Activated CD4-positive, alpha-beta T cell treated with anti-CD3 and anti-CD28 coated beads, Interleukin-2, amount 10 ng/mL, durations not matched to agents 24 days and 14 days (primary cell): ENCODE measurements at regions of chr10 and their contacts with region 1.

Region 1: GRCh38 chr10:92290837-92291615 is at the starts of genes CPEB3 and MARCHF5:
- DNase-seq: peak; percentile 98
- H3K4me3 Mint-ChIP-seq: peak within 1 kb of the TSS; percentile 93
- H3K27ac Mint-ChIP-seq: peak within 1 kb of the TSS; percentile 85
- H3K4me1 Mint-ChIP-seq: peaks cover 22% of the 10 kb centered on the region
- H3K27me3 Mint-ChIP-seq: no peaks in the 10 kb centered on the region
- total RNA-seq, gene CPEB3: 2.2 and 2.5 TPM in 2 replicates
- total RNA-seq, gene MARCHF5: 22.0 and 24.7 TPM in 2 replicates

Region 2: GRCh38 chr10:91923371-91924211 is 367.4 kb before region 1 on chr10 and contains the start of gene BTAF1:
- intact Hi-C with region 1: loop called (anchors 10 kb)
- DNase-seq: peak; percentile 97
- H3K4me3 Mint-ChIP-seq: peak within 1 kb of the TSS; percentile 87
- H3K27ac Mint-ChIP-seq: peak within 1 kb of the TSS; percentile 99
- H3K4me1 Mint-ChIP-seq: peaks cover 28% of the 10 kb centered on the region
- H3K27me3 Mint-ChIP-seq: peaks cover 2% of the 10 kb centered on the region
- total RNA-seq, gene BTAF1: 63.9 and 67.1 TPM in 2 replicates

Region 3: DNA sequence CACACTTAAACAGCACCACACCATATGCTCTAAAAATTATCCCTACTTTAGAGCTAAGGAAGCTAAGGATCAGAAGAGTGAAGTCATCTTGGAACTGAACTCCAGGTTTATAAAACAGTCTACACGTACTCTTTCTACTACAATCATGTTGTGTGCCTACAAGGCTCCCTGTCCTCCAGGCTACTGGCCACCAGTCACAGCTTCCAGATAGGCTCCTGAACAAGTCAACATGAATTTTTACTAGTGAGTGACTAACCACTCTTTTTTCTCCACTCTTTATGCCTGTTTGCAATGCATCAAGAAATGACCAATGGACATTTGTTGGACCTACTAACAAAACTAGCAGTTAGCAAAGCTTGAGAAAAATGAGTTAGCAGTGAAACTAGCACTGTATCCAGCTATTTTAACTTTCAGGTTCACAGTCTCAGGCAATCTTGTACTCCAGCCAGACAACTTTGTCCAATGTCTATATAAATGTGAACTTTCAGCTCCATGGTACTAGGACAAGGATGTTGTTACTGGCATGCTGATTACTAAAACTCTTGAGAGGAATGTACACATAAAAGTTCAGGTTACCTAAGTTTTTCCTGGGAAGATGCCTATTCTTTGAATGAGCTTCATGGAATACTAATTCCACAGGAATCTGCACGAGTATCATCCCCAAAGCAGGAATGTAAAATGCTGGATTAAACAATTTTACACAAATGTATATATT is 187.5 kb before region 1 on chr10:
- intact Hi-C with region 1: loop called (anchors 5 kb)
- DNase-seq: no peak
- H3K4me3 Mint-ChIP-seq: no peak overlapping the region
- H3K27ac Mint-ChIP-seq: no peak overlapping the region
- H3K4me1 Mint-ChIP-seq: peaks cover 14% of the 10 kb centered on the region
- H3K27me3 Mint-ChIP-seq: no peaks in the 10 kb centered on the region

Region 4: DNA sequence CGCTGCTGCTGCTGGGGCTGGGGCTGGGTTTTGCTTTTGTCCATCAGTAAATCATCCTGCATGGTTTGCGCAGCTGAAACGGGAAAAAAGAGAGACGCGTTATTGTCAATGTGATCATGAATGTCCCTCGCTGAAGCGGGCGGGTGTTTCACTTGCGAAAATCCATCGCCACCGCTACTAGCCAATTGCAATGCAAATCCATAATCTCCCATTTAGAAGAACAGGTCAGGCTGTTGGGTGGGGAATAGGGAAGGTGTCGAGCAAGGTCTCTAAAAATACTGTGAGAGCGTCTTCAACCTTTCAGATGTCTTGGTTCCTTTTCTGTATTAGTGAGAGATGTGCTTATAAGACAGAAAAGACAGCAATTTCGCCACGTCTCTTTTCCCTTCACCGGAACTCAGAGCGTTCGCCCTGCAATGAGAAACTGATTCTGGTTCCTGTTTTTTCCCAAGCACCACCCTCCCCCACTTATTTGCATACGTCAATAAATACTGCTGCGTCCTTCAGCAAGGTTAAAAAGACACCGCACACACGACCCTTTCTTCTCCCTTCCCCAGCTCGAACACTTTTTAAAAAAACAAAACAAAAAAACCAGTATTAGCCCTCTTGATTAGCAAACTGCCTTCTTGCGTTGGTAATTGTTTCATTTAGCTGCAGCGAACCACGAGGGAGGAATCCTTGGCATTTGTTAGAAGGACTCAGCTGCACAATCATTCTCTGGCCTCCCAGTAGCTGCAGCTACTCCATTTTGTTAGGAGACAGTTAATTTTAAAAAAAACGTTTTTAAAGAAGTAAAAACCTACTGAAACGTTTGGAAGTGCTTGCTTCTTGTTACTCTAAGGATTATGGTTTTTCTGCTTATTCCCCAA is 50.5 kb before region 1 on chr10:
- intact Hi-C with region 1: loop called (anchors 1 kb)
- DNase-seq: peak; percentile 84
- H3K4me3 Mint-ChIP-seq: peak overlapping the region; percentile 94
- H3K27ac Mint-ChIP-seq: peak overlapping the region; percentile 59
- H3K4me1 Mint-ChIP-seq: peaks cover 23% of the 10 kb centered on the region
- H3K27me3 Mint-ChIP-seq: peaks cover 21% of the 10 kb centered on the region

Region 5: GRCh38 chr10:92592761-92593618 is 302.0 kb after region 1 on chr10 and contains the start of gene KIF11:
- intact Hi-C with region 1: loop called (anchors 1 kb)
- DNase-seq: peak; percentile 99
- H3K4me3 Mint-ChIP-seq: peak within 1 kb of the TSS; percentile 99
- H3K27ac Mint-ChIP-seq: peak within 1 kb of the TSS; percentile 98
- H3K4me1 Mint-ChIP-seq: peaks cover 52% of the 10 kb centered on the region
- H3K27me3 Mint-ChIP-seq: no peaks in the 10 kb centered on the region
- total RNA-seq, gene KIF11: 39.0 and 39.9 TPM in 2 replicates

Region 6: GRCh38 chr10:92712016-92712889 is 421.2 kb after region 1 on chr10:
- intact Hi-C with region 1: no loop called
- DNase-seq: no peak
- H3K4me3 Mint-ChIP-seq: no peak overlapping the region
- H3K27ac Mint-ChIP-seq: no peak overlapping the region
- H3K4me1 Mint-ChIP-seq: peaks cover 1% of the 10 kb centered on the region
- H3K27me3 Mint-ChIP-seq: peaks cover 25% of the 10 kb centered on the region